Activated B cell treated with CpG ODN at 0.5 μM for 24 hours (primary cell): ENCODE measurements at regions of chr2 and their contacts with region 1.

Region 1: GRCh38 chr2:161172901-161173540 is 12.8 kb downstream of the TANK start:
- DNase-seq: no peak
- ATAC-seq: no peak
- H3K4me3 Mint-ChIP-seq: peak overlapping the region; percentile 21
- H3K27ac Mint-ChIP-seq: peak overlapping the region; percentile 63
- H3K4me1 Mint-ChIP-seq: peaks cover 92% of the 10 kb centered on the region
- H3K27me3 Mint-ChIP-seq: no peaks in the 10 kb centered on the region
- CTCF ChIP-seq: no peak

Region 2: GRCh38 chr2:161190050-161190449 is 17.0 kb after region 1 on chr2:
- CTCF ChIA-PET with region 1: no interaction called
- POLR2A ChIA-PET with region 1: no interaction called
- intact Hi-C with region 1: loop called (anchors 2 kb)
- DNase-seq: no peak
- ATAC-seq: no peak
- H3K4me3 Mint-ChIP-seq: no peak overlapping the region
- H3K27ac Mint-ChIP-seq: no peak overlapping the region
- H3K4me1 Mint-ChIP-seq: peaks cover 59% of the 10 kb centered on the region
- H3K27me3 Mint-ChIP-seq: no peaks in the 10 kb centered on the region
- CTCF ChIP-seq: no peak

Region 3: GRCh38 chr2:161208527-161209139 is 35.6 kb after region 1 on chr2:
- CTCF ChIA-PET with region 1: no interaction called
- POLR2A ChIA-PET with region 1: no interaction called
- intact Hi-C with region 1: loop called (anchors 5 kb)
- DNase-seq: no peak
- ATAC-seq: no peak
- H3K4me3 Mint-ChIP-seq: no peak overlapping the region
- H3K27ac Mint-ChIP-seq: no peak overlapping the region
- H3K4me1 Mint-ChIP-seq: peaks cover 16% of the 10 kb centered on the region
- H3K27me3 Mint-ChIP-seq: no peaks in the 10 kb centered on the region
- CTCF ChIP-seq: no peak

Region 4: DNA sequence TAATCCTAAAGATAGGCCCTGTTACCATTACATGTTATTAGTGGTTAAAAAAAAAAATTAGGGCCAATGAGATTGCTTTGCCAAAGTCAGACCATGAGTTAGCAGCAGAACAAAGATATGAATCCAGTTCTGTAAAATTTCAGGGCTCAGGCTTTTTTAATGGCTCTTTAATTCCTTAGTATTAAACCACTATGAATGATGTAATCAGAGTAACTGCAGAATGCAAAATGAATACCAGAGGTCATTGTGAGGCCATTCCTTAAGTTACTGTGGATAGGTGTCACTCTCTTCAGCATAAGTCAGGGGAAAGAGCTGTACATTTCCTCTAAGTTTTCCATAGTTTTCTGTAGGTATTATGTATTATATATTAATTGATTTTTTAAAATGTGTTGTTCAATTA is 200.9 kb after region 1 on chr2:
- CTCF ChIA-PET with region 1: no interaction called
- POLR2A ChIA-PET with region 1: no interaction called
- intact Hi-C with region 1: no loop called
- DNase-seq: no peak
- ATAC-seq: no peak
- H3K4me3 Mint-ChIP-seq: no peak overlapping the region
- H3K27ac Mint-ChIP-seq: no peak overlapping the region
- H3K4me1 Mint-ChIP-seq: no peaks in the 10 kb centered on the region
- H3K27me3 Mint-ChIP-seq: no peaks in the 10 kb centered on the region
- CTCF ChIP-seq: no peak

Region 5: GRCh38 chr2:162217598-162217997 is 1044.6 kb after region 1 on chr2:
- CTCF ChIA-PET with region 1: no interaction called
- POLR2A ChIA-PET with region 1: no interaction called
- intact Hi-C with region 1: no loop called
- DNase-seq: no peak
- ATAC-seq: no peak
- H3K4me3 Mint-ChIP-seq: no peak overlapping the region
- H3K27ac Mint-ChIP-seq: no peak overlapping the region
- H3K4me1 Mint-ChIP-seq: no peaks in the 10 kb centered on the region
- H3K27me3 Mint-ChIP-seq: peaks cover 17% of the 10 kb centered on the region
- CTCF ChIP-seq: no peak